Head of caudate nucleus (tissue), 42 donors: ENCODE measurements at regions of chr6 and their contacts with region 1.

Region 1: GRCh38 chr6:137415127-137415833 is 78.9 kb downstream of the OLIG3 start:
- DNase-seq: peak; percentile 25 to 90 (median 69)

Region 2: DNA sequence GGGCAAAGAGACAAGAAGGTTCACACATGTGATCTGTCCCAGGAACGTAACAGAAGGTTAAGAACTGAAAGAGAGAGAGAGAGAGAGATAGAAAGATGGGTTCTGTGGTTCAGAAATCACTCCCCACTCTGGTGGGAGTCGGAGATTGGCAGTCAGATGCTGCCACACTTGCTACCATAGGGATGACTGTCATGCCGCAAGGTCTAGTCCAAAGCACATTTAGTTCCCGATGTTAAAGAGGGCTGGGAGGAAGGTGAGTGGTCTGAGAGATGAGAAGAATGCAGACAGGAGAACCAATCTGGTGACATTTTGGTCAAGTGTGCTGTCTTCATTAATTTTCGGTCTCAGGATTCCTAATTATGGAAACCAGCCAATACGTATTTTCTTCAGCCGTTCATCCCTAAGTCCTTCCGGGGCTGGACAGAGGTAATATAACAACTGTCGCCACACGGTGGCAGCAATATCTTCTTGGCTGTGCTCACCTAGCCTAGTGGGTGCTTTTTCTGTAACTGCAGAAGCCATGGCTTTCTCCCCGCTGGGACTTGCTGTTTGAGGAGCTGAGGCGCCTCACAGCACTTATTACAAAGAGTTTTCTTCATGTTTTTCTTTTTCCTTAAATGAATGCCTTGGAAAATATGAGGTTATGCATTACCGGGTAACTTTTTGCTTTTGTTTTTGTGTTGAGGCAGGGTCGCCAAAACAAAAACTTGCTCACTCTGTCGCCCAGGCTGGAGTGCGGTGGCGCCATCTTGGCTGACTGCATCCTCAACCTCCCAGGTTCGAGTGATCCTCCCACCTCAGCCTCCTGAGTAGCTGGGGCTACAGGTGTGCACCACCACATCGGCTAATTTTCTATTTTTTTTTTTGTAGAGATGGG is 447.2 kb before region 1 on chr6:
- intact Hi-C with region 1: no loop called
- DNase-seq: peak; percentile 37 to 87 (median 70)

Region 3: GRCh38 chr6:137264311-137265075 is 150.8 kb before region 1 on chr6:
- intact Hi-C with region 1: loop called (anchors 5 kb)
- DNase-seq: no peak

Region 4: GRCh38 chr6:137283940-137284810 is 131.1 kb before region 1 on chr6:
- intact Hi-C with region 1: loop called (anchors 5 kb)
- DNase-seq: peak in 3 of 42 donors; percentile 15 to 43 (median 25)

Region 5: DNA sequence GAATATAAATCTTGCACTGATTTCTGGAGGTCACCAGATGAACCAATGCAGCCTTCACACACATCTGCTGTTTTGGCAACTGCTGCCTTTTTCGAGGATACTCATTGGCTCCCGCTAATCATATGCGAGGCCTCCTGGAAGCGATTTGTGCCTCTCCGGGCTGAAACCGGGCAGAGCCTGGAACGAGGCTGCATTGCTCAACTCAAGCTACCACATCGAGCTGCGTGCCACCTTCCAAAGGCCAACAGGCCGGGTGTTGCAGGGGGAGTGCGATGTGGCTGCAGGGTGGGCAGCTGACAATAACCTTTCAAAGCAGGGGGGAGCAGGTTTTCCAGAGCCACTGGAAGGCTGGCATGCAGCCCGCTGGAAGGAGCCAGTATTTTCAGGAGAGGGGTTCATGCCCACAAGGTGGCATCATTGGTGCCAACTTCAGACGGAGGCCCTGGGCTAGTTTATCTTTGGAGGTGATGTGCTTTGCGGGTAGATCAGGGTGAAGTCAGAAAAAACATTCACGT is 73.5 kb before region 1 on chr6:
- intact Hi-C with region 1: loop called (anchors 2 kb)
- DNase-seq: peak; percentile 42 to 90 (median 76)